Activated T-helper 2 cell treated with anti-CD3 and anti-CD28 coated beads, Interferon-gamma antibody, Interleukin-2, Interleukin-4, amounts not matched to agents 10 μg/mL and 5 μg/mL and 100 μg/mL, durations not matched to agents 14 hours and 24 hours and 36 hours (primary cell): ENCODE measurements at regions of chr2 and their contacts with region 1.

Region 1: DNA sequence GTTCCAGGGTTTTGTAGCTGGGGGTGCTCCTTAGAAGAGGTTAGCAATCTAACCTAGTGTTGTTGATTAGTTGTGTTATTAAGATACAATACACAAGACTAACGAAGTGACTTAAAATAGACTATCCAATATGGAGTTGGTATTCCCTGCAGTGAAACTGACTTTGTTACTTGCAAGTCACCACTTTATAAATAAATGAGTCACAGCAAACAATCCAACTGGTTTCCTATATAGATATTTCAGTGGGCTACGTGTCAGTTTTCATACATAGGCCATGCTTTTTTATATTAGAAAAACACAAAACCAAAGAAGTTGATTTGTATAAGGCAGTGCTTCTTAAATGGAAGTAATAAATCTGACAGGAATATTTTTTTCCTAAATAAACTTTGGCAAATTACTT is 274.0 kb downstream of the CAMKMT start:
- DNase-seq: no peak
- H3K4me3 Mint-ChIP-seq: no peak overlapping the region
- H3K27ac Mint-ChIP-seq: no peak overlapping the region
- H3K4me1 Mint-ChIP-seq: peaks cover 7% of the 10 kb centered on the region
- H3K27me3 Mint-ChIP-seq: no peaks in the 10 kb centered on the region

Region 2: DNA sequence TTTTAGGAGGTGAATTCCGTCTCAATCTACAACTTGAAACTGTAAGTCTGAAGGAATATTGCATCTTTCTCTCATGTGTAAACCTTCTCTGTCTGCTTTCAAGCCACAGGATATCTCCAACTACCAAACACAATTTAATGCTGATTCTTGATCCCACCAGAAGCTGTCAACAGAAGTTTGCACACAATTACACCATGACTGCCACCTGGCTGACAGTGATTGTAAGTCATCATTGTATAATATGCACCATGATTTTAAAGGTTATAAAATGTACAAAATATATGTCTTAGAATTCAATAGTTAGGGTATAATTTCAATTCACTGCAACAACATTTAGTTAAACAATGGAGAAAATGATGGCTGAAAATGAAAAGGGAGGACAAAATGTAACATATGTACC is 292.9 kb before region 1 on chr2:
- intact Hi-C with region 1: no loop called
- DNase-seq: no peak
- H3K4me3 Mint-ChIP-seq: no peak overlapping the region
- H3K27ac Mint-ChIP-seq: no peak overlapping the region
- H3K4me1 Mint-ChIP-seq: no peaks in the 10 kb centered on the region
- H3K27me3 Mint-ChIP-seq: no peaks in the 10 kb centered on the region

Region 3: GRCh38 chr2:44553456-44553855 is 82.3 kb before region 1 on chr2:
- intact Hi-C with region 1: no loop called
- DNase-seq: no peak
- H3K4me3 Mint-ChIP-seq: no peak overlapping the region
- H3K27ac Mint-ChIP-seq: no peak overlapping the region
- H3K4me1 Mint-ChIP-seq: peaks cover 11% of the 10 kb centered on the region
- H3K27me3 Mint-ChIP-seq: no peaks in the 10 kb centered on the region

Region 4: GRCh38 chr2:44616667-44617155 is 19.0 kb before region 1 on chr2:
- intact Hi-C with region 1: loop called (anchors 2 kb)
- DNase-seq: no peak
- H3K4me3 Mint-ChIP-seq: no peak overlapping the region
- H3K27ac Mint-ChIP-seq: no peak overlapping the region
- H3K4me1 Mint-ChIP-seq: peaks cover 12% of the 10 kb centered on the region
- H3K27me3 Mint-ChIP-seq: no peaks in the 10 kb centered on the region